Activated T-helper 1 cell treated with anti-CD3 and anti-CD28 coated beads, Interleukin-12 subunit alpha, Interleukin-12 subunit beta, Interleukin-2, Interleukin-4 antibody, amounts not matched to agents 30 ng/mL and 10 ng/mL and 1 ng/mL, durations not matched to agents 14 hours and 24 hours and 36 hours (primary cell): ENCODE measurements at regions of chr4 and their contacts with region 1.

Region 1: DNA sequence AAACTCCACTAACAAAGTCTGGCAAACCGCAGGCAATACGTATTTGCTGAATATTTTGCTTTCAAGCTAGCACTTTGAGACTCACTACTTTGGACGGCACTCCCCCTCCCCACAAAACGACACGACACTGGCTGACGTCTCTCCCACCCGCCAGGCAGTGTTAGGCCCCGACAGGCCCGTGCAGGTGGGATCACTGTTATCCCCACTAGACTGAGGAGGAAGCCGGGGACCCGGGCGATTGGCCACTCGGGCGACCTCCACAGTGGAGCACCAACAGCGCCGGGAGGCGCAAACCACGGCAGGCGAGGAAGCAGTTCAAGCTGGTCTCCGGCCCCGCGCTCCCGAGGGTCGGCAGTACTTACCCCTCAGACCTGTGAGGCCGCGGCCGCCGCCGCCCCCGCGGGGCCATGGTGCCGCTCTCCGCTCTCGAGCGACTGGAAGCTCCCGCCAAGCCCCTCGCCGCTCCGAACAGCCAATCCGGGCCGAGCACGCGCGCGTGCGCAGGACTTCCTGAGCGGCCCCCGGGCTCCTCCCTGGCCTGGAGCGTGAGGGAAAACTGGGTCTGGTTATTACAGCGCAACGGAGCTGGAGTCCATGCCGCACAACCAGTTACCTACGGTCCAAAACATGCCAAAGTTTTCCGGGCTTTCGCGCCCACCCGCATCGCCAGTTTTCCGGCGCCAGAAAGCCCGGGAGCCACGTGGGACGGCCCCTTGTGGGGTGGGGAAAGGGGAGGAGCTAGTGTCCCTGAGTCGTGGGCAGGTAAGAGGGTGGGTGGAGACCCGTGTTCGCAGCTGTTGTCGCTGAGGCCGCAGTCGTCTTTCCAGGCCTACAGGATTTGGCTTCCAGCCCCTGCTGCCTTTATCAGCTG is at the start of gene CENPU:
- DNase-seq: peak; percentile 96
- H3K4me3 Mint-ChIP-seq: peak within 1 kb of the TSS; percentile 94
- H3K27ac Mint-ChIP-seq: peak within 1 kb of the TSS; percentile 95
- H3K4me1 Mint-ChIP-seq: peaks cover 50% of the 10 kb centered on the region
- H3K27me3 Mint-ChIP-seq: no peaks in the 10 kb centered on the region
- total RNA-seq, gene CENPU: 78.3 and 80.3 TPM in 2 replicates

Region 2: DNA sequence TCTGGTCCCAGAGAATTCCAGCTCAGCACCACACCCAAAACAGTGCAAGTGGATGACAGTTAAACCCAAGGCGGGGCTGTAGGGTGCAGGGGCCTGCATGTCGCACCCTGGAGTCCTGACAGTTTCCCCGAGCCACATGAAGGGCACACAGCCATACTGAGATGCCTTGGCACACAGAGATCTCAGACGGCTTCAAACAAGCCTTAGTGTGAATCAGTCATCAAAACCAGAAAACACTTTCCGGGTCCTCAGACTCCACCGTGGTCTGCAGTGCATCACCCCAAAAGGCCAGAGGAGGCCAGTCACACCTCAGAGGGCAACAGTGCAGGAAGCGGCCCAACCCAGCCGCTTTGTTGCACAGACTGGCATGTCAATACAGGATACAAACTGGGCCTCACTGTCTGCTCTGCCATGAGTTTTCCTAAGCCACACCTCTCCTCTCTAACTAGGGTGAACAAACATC is 451.6 kb before region 1 on chr4:
- intact Hi-C with region 1: loop called (anchors 1 kb)
- DNase-seq: peak; percentile 53
- H3K4me3 Mint-ChIP-seq: peak overlapping the region; percentile 50
- H3K27ac Mint-ChIP-seq: peak overlapping the region; percentile 87
- H3K4me1 Mint-ChIP-seq: peaks cover 75% of the 10 kb centered on the region
- H3K27me3 Mint-ChIP-seq: no peaks in the 10 kb centered on the region

Region 3: GRCh38 chr4:184474263-184475095 is 259.4 kb before region 1 on chr4 and contains the start of gene IRF2:
- intact Hi-C with region 1: loop called (anchors 1 kb)
- DNase-seq: peak; percentile 94
- H3K4me3 Mint-ChIP-seq: peak within 1 kb of the TSS; percentile 97
- H3K27ac Mint-ChIP-seq: peak within 1 kb of the TSS; percentile 96
- H3K4me1 Mint-ChIP-seq: peaks cover 64% of the 10 kb centered on the region
- H3K27me3 Mint-ChIP-seq: no peaks in the 10 kb centered on the region
- total RNA-seq, gene IRF2: 64.2 and 75.8 TPM in 2 replicates

Region 4: DNA sequence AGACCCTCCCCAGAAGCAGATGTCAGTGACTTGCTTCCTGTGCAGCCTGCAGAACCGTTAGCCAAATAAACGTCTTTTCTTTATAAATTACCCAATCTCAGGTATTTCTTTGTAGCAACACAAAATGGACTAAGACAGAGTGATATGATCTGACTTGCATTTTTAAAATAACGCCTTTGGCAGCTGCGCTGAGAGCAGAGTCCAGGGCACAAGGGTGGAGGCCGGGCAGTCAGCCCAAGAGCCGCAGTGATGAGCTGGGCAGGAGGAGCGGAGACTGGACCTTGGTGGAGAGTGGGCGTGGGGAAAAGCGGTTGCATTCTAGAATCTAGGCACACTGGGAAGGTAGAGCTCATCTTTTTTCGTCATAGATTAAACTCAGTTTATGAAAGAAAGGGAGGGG is 148.4 kb after region 1 on chr4:
- intact Hi-C with region 1: no loop called
- DNase-seq: no peak
- H3K4me3 Mint-ChIP-seq: no peak overlapping the region
- H3K27ac Mint-ChIP-seq: no peak overlapping the region
- H3K4me1 Mint-ChIP-seq: no peaks in the 10 kb centered on the region
- H3K27me3 Mint-ChIP-seq: peaks cover 9% of the 10 kb centered on the region

Region 5: GRCh38 chr4:185142912-185143595 is 409.2 kb after region 1 on chr4 and contains the start of gene SLC25A4:
- intact Hi-C with region 1: loop called (anchors 5 kb)
- DNase-seq: peak; percentile 56
- H3K4me3 Mint-ChIP-seq: peak within 1 kb of the TSS; percentile 82
- H3K27ac Mint-ChIP-seq: no peak within 1 kb of the TSS
- H3K4me1 Mint-ChIP-seq: peaks cover 12% of the 10 kb centered on the region
- H3K27me3 Mint-ChIP-seq: peaks cover 71% of the 10 kb centered on the region
- total RNA-seq, gene SLC25A4: 2.3 and 2.7 TPM in 2 replicates

Region 6: DNA sequence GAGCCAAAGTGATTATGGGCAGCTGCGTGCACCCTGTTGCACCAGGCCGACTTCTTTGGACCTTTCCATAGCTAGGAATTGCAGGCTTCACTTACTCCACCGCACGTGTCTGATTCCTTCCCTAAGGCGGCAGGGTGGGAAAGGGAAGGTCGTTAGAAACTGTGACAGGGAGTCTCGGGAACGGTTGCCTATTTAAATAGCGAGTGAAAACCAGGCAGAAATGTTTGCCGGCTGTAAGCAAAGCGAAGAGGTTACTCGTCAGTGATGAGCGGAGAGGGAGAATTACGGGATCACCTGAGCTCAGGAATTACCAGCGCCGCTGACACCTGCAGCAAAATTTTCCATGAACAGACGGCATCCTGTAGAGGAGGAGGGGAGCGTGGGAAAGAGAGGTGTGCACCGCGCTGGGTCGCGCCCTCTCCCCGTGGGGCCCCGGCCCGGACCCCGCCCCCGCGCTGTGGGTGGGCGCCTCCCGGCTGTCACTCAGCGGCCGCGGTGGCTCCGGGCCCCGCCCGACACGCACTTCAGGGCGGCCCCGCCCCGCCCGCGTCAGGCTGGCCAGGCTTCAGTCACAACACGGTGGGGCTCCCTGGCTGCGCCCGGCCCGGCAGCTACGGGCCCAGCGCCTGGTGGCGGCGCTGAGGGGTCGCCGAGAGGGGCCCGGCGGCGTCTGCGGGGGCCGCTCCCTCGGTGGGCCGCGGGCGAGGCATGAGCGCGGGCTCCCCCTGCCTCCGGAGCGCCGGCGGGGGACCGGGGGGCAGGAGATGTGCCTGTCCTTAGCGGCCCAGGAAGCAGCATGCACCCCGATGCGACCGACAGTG is 475.4 kb after region 1 on chr4 and contains the start of gene SNX25:
- intact Hi-C with region 1: loop called (anchors 1 kb)
- DNase-seq: peak; percentile 86
- H3K4me3 Mint-ChIP-seq: peak within 1 kb of the TSS; percentile 92
- H3K27ac Mint-ChIP-seq: peak within 1 kb of the TSS; percentile 86
- H3K4me1 Mint-ChIP-seq: peaks cover 38% of the 10 kb centered on the region
- H3K27me3 Mint-ChIP-seq: peaks cover 4% of the 10 kb centered on the region
- total RNA-seq, gene SNX25: 22.9 and 25.3 TPM in 2 replicates